ENCODE measurements at regions of chr6 and their contacts with region 1.

Region 1: DNA sequence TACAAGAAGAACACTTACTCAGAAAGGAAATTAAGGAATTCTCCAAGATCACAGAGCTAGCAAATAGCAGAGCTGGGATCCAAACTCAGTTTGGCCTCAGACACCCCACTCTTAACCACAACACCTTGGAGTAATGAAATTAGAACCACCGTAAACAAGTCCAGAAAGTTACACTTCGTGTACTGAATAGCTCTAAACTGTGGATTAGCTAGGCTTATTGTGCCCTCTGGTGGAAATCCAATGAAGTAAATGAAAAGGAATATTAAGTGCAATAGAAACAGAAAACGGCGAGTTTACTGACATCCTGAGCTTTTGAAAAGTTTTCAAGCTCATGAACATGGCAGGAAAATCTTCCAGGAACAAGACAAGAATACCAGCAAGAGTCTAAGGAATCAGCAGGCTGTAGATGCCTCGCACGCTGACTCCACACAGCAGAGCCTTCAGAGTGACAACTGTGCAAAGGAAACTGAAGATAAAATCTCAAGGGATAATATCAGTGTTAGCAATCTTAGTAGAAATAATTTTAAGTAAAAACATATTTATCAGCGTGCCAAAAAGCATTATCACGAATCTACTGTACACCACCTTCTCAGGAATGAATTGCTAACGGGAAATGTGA is 34.6 kb downstream of the FBXO5 start:
- DNase-seq: no peak
- ATAC-seq: peak in 3 of 4 donors; percentile 64 to 69 (median 65)
- H3K4me3 ChIP-seq: peak overlapping the region in 5 of 12 donors; percentile 3 to 37 (median 8)
- H3K27ac ChIP-seq: no peak overlapping the region
- H3K4me1 ChIP-seq: peaks cover 0 to 8% (median 0%) of the 10 kb centered on the region in 12 donors
- H3K27me3 ChIP-seq: peaks cover 0 to 14% (median 0%) of the 10 kb centered on the region in 9 donors
- CTCF ChIP-seq: peak; percentile 46 to 76 (median 60)
- POLR2A ChIP-seq: no peak

Region 2: DNA sequence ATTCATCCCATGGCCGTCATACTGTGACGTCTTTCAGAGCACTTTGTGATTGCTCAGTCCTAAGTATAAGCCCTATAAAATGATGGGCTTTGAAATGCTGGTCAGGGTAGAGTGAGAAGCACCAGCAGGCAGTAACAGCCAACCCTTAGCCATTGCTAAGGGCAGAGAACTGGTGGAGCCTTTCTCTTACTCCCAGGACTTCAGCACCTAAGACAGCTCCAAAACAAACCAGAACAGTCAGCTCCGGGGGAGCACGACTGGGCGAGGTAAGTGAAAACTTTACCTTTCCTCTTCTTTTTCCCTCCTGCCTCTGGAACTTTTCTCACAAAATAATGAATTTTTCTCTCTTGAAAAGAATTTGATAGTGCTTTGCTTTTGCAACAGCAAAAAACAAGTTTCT is 197.6 kb before region 1 on chr6 and contains the start of gene VIP:
- intact Hi-C with region 1: loop called in 3 of 10 experiments (anchors 5 to 10 kb)
- DNase-seq: no peak
- ATAC-seq: no peak
- H3K4me3 ChIP-seq: no peak within 1 kb of the TSS
- H3K27ac ChIP-seq: no peak within 1 kb of the TSS
- H3K4me1 ChIP-seq: no peaks in the 10 kb centered on the region
- H3K27me3 ChIP-seq: no peaks in the 10 kb centered on the region
- CTCF ChIP-seq: no peak
- POLR2A ChIP-seq: no peak
- total RNA-seq, gene VIP: 0.29 to 0.65 (median 0.46) TPM in 6 of 9 donors, not detected in the others

Region 3: DNA sequence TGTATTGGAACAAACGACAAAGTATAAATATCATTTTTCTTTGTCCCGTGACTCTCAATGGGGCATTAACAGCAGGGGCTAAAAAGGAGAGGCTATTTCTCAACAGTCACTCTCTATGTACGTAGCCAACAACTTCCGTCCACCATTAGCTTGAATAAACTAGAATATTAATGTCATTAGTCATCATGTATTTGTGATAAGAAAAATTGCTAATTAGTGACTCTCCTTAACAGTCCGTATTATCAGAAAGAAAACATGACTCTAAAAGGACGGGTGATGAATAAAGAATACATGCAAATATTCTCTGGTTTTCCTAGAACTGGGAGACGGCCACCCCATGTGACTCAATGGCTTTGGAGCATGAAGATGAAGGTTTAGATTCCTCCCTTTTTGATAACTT is 179.1 kb before region 1 on chr6:
- intact Hi-C with region 1: no loop called
- DNase-seq: no peak
- ATAC-seq: no peak
- H3K4me3 ChIP-seq: no peak overlapping the region
- H3K27ac ChIP-seq: no peak overlapping the region
- H3K4me1 ChIP-seq: no peaks in the 10 kb centered on the region
- H3K27me3 ChIP-seq: no peaks in the 10 kb centered on the region
- CTCF ChIP-seq: no peak
- POLR2A ChIP-seq: no peak

Region 4: GRCh38 chr6:152863618-152864326 is 84.5 kb before region 1 on chr6:
- intact Hi-C with region 1: loop called (anchors 1 to 5 kb)
- DNase-seq: peak in 4 of 5 donors; percentile 35 to 66 (median 62)
- ATAC-seq: peak in 3 of 4 donors; percentile 69 to 87 (median 79)
- H3K4me3 ChIP-seq: no peak overlapping the region
- H3K27ac ChIP-seq: no peak overlapping the region
- H3K4me1 ChIP-seq: no peaks in the 10 kb centered on the region
- H3K27me3 ChIP-seq: no peaks in the 10 kb centered on the region
- CTCF ChIP-seq: peak; percentile 56 to 81 (median 68)
- POLR2A ChIP-seq: no peak

Region 5: GRCh38 chr6:153013438-153013837 is 65.2 kb after region 1 on chr6:
- intact Hi-C with region 1: loop called in 1 of 10 experiments (anchors 10 kb)
- DNase-seq: no peak
- ATAC-seq: no peak
- H3K4me3 ChIP-seq: no peak overlapping the region
- H3K27ac ChIP-seq: no peak overlapping the region
- H3K4me1 ChIP-seq: no peaks in the 10 kb centered on the region
- H3K27me3 ChIP-seq: no peaks in the 10 kb centered on the region
- CTCF ChIP-seq: no peak
- POLR2A ChIP-seq: no peak

Region 6: GRCh38 chr6:153023977-153024708 is 75.9 kb after region 1 on chr6:
- intact Hi-C with region 1: loop called in 4 of 10 experiments (anchors 5 to 10 kb)
- DNase-seq: peak in 2 of 5 donors; percentile 12 to 18
- ATAC-seq: peak; percentile 61 to 82 (median 70)
- H3K4me3 ChIP-seq: no peak overlapping the region
- H3K27ac ChIP-seq: no peak overlapping the region
- H3K4me1 ChIP-seq: peaks cover 0 to 4% (median 0%) of the 10 kb centered on the region in 12 donors
- H3K27me3 ChIP-seq: no peaks in the 10 kb centered on the region
- CTCF ChIP-seq: peak; percentile 74 to 88 (median 79)
- POLR2A ChIP-seq: no peak